Motor neuron (in vitro differentiated cells): ENCODE measurements at regions of chr9 and their contacts with region 1.

Region 1: DNA sequence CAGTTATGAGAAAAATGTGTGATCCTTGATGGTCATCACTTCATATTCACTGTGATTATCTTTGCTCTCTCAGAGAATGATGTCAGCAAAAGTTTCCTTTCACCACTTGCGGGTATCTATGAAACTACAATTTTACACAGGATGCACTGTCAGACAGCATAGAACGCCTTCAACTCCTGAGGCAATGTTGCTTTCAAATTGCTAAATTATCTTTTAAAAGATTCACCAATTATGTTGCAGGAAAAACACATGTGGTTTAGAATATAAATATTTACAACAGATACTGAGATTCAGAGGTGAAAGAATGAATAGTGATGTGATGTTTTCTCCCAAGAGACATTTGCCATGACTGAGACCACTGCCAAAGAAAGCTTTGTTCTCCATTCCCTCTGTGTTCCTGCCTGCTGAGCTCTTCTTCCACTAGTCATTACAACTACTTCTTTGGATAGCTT is 879.8 kb upstream of the DMAC1 start:
- ATAC-seq: peak in 5 of 8 experiments; percentile 54 to 81 (median 60)
- H3K4me3 ChIP-seq: no peak overlapping the region
- H3K27ac ChIP-seq: no peak overlapping the region
- H3K4me1 ChIP-seq: peaks cover 26 to 41% of the 10 kb centered on the region in 2 donors

Region 2: DNA sequence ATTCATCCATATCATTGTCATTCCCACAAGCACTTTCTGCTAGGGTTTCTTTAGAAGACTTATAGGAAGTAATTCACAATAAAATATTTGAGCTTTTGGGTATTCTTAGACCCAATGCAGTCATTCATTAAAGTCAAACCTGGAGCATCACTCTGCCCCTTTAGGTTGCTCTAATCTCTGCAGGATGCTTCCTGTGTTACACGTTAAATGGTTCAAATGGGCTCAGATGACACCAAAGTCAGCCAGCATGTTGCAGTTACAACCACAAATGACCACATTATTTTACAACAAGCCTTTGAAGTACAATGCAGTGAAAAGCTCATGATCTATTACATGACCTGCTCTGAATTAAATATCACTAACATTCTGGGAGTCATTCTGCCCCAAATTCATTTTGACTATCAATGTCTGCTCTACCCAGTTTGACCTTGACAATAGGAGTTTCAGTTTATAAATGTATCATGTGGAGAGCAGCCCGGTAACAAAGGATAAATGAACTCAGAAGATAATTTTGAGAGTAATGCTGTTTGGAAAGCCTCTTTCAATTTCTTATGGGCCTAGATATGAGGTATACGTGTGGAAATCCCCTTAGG is 211.3 kb before region 1 on chr9:
- in situ Hi-C with region 1: no loop called
- ATAC-seq: no peak
- H3K4me3 ChIP-seq: no peak overlapping the region
- H3K27ac ChIP-seq: no peak overlapping the region
- H3K4me1 ChIP-seq: peaks cover 4 to 43% of the 10 kb centered on the region in 2 donors

Region 3: DNA sequence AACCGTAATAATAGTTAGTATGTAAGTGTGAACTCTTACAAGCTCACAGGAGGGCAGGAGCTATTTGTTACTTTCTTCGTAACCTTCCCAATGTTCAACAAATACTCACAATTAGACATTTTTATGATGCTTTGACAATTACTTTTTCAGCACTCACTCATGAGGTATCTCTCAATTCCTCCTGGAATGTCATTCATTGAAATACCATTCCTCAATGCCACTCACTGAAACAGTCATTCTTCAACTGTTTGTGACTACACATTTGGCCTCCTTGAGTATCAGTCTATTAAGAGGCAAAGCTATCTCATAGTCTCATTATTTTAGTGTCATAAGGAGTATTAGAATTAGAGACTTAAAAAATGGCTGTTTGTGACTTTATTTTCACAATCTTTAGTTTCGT is 145.7 kb before region 1 on chr9:
- in situ Hi-C with region 1: no loop called
- ATAC-seq: no peak
- H3K4me3 ChIP-seq: no peak overlapping the region
- H3K27ac ChIP-seq: no peak overlapping the region
- H3K4me1 ChIP-seq: peaks cover 2 to 34% of the 10 kb centered on the region in 2 donors

Region 4: DNA sequence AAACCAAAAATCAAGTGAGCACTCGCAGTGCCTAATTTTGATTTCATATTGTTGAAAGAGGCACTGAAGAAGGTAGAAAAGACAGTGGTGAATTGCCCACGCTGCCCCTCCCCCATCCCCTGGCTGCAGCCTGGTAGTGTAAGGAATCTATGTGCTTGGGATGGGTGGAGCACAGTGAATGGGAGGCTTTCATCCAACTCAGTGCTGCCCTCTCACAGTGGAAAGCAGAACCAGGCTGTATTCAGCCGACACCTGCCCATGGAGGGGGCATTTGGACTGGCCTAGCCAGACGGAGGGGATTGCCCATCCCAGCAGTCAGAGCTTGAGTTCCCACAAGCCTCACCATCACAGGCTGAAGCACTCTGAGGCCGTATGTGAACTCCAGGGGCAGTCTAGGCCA is 79.5 kb before region 1 on chr9:
- in situ Hi-C with region 1: loop called in 1 of 9 experiments (anchors 25 kb)
- ATAC-seq: no peak
- H3K4me3 ChIP-seq: no peak overlapping the region
- H3K27ac ChIP-seq: no peak overlapping the region
- H3K4me1 ChIP-seq: peaks cover 0 to 8% of the 10 kb centered on the region in 2 donors